CD8-positive, alpha-beta T cell (primary cell): ENCODE measurements at regions of chr16 and their contacts with region 1.

Region 1: DNA sequence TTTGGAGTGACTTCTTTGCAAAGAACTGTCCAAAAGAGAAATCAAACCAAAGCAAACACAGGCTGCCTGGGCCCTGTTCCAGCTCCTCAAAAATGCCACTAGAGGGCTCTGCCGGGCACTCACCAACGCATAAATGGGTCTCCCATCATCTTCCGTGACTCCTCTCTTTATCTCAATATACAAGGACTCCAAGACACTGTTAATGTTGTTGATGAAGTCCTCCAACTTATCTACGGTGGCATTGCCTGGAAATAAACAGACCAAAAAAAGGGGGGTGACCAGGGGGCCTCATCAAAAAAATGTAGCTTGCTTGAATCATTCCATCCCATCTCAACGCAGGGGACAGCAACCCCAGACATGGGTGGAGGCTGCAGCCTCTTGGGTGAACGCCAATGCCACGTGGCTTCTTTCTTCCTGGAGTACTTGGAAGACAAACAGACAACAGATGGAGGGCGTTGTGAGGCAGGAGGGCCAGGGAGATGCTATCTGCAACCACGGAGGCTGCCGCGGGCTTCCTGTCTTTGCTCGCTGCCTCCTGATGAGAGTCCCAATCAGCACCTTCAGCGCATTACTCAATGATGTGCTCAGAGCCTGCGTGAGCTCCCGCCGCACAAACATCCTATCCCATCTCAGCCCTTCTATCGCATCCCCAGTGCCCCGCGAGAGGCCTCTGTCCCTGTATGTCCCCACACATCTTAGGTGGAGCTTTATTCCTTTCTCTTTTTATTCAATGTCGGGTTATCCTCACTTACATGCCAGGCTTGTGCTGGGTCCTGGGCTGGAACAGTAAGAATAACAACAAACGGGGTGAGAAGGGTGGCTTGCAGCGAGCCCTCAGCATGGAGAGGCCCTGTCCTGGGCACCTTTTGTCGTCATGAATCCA is 32.0 kb downstream of the KDM8 start:
- DNase-seq: peak; percentile 78 to 98 (median 93)
- ATAC-seq: peak; percentile 64
- H3K4me3 ChIP-seq: peak overlapping the region; percentile 14 to 30
- H3K4me3 Mint-ChIP-seq: peak overlapping the region; percentile 78
- H3K27ac ChIP-seq: peak overlapping the region; percentile 90 to 97
- H3K27ac Mint-ChIP-seq: peak overlapping the region; percentile 98
- H3K4me1 ChIP-seq: peaks cover 84% of the 10 kb centered on the region
- H3K4me1 Mint-ChIP-seq: peaks cover 92% of the 10 kb centered on the region
- H3K27me3 ChIP-seq: no peaks in the 10 kb centered on the region
- H3K27me3 Mint-ChIP-seq: no peaks in the 10 kb centered on the region
- CTCF ChIP-seq: peak; percentile 76

Region 2: DNA sequence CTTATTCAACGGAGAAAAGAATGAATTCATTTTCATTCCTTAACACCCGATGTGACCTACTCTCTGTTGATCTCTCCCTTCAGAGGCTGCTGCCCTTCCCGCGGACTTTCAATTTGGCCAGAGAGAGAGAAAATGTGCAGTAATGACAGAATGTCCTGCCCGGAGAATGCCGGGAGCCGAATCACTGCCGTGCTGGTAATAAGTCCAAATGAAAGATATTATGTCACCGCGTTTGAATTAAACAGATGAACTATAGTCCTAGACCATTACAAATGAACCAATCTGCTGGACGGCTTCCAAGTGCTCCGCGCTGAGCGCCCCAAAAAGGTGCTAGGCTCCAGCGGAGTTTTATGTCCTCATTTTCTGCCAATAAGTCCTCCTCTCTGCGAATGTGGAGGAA is 183.3 kb before region 1 on chr16:
- CTCF ChIA-PET with region 1: no interaction called
- POLR2A ChIA-PET with region 1: no interaction called
- intact Hi-C with region 1: no loop called
- DNase-seq: no peak
- ATAC-seq: no peak
- H3K4me3 ChIP-seq: no peak overlapping the region
- H3K4me3 Mint-ChIP-seq: no peak overlapping the region
- H3K27ac ChIP-seq: no peak overlapping the region
- H3K27ac Mint-ChIP-seq: no peak overlapping the region
- H3K4me1 ChIP-seq: no peaks in the 10 kb centered on the region
- H3K4me1 Mint-ChIP-seq: no peaks in the 10 kb centered on the region
- H3K27me3 ChIP-seq: no peaks in the 10 kb centered on the region
- H3K27me3 Mint-ChIP-seq: peaks cover 2% of the 10 kb centered on the region
- CTCF ChIP-seq: no peak

Region 3: GRCh38 chr16:27109666-27110523 is 125.4 kb before region 1 on chr16:
- CTCF ChIA-PET with region 1: no interaction called
- POLR2A ChIA-PET with region 1: interaction called, 3 read pairs
- intact Hi-C with region 1: loop called in 1 of 2 experiments (anchors 2 kb)
- DNase-seq: peak; percentile 64 to 85 (median 72)
- ATAC-seq: peak; percentile 98
- H3K4me3 ChIP-seq: peak overlapping the region; percentile 29 to 43
- H3K4me3 Mint-ChIP-seq: peak overlapping the region; percentile 66
- H3K27ac ChIP-seq: no peak overlapping the region
- H3K27ac Mint-ChIP-seq: no peak overlapping the region
- H3K4me1 ChIP-seq: peaks cover 9% of the 10 kb centered on the region
- H3K4me1 Mint-ChIP-seq: no peaks in the 10 kb centered on the region
- H3K27me3 ChIP-seq: no peaks in the 10 kb centered on the region
- H3K27me3 Mint-ChIP-seq: peaks cover 7% of the 10 kb centered on the region
- CTCF ChIP-seq: peak; percentile 74

Region 4: DNA sequence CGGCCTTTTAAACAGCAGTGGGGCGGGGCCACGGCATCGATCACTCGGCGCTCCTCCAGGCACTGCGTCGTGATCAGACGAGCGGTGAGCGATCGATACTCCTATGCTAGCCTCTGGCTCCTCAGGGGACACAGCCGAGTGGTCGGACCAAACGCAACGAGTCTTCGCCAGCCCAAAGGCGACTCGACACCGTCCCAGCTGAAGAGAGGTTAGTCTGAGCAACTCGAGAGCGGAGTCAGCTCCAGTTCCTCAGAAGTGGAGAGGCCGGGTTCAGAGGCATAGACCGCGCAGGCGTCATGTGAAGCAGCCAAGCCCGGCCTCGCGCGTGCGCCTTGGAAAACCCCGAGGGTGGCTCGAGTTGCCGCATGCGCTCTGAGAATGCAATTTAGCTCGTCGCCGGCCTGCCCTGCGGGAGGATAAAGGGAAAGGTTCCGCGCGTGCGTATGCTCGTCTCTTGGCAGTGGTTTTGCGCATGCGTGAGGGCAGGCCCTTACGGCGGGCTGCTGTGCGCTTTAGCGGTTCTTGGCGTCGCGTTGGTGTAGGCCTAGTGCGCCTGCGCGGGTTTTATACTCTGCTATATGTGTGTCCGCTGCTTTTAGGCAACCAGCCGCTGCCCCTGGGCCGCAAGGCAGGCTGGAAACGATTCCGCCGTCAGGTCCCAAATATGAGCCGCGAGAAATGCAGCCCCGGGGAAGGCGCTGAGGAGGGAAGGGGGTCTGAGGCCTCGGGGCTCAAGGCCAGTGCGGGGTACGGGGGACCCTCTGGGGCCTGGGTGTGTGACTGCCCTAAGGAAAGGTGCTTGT is 31.7 kb before region 1 on chr16 and contains the start of gene KDM8:
- CTCF ChIA-PET with region 1: interaction called, 25 read pairs
- POLR2A ChIA-PET with region 1: interaction called, 19 read pairs
- intact Hi-C with region 1: loop called (anchors 1 to 2 kb)
- DNase-seq: peak; percentile 99 to 100 (median 100)
- ATAC-seq: peak; percentile 85
- H3K4me3 ChIP-seq: peak within 1 kb of the TSS; percentile 83 to 93
- H3K4me3 Mint-ChIP-seq: peak within 1 kb of the TSS; percentile 96
- H3K27ac ChIP-seq: peak within 1 kb of the TSS; percentile 83 to 97
- H3K27ac Mint-ChIP-seq: peak within 1 kb of the TSS; percentile 99
- H3K4me1 ChIP-seq: peaks cover 54% of the 10 kb centered on the region
- H3K4me1 Mint-ChIP-seq: peaks cover 61% of the 10 kb centered on the region
- H3K27me3 ChIP-seq: no peaks in the 10 kb centered on the region
- H3K27me3 Mint-ChIP-seq: no peaks in the 10 kb centered on the region
- CTCF ChIP-seq: no peak
- total RNA-seq, gene KDM8: 17.6 to 22.6 TPM

Region 5: DNA sequence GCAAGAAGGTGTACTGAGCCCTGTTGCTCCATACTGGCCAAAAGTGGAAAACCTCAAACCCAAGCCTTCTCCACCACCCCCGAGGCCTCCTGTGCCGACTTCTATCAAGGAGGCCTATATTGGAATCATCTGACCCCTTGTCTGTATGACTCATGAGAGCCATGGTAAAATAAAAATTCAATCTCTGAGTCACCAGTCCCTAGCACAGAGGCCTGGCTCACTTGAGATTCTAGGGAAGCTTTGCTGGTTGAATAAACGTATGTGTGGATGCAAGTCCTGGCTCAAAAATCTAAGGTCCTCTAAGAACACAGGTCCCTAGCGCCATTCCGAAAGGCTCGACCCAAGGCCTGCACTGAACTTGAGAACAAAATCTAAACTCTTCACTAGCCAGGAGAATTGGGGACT is 18.2 kb after region 1 on chr16:
- CTCF ChIA-PET with region 1: interaction called, 23 read pairs
- POLR2A ChIA-PET with region 1: interaction called, 4 read pairs
- intact Hi-C with region 1: no loop called
- DNase-seq: peak in 1 of 9 experiments; percentile 38
- ATAC-seq: no peak
- H3K4me3 ChIP-seq: no peak overlapping the region
- H3K4me3 Mint-ChIP-seq: peak overlapping the region; percentile 63
- H3K27ac ChIP-seq: no peak overlapping the region
- H3K27ac Mint-ChIP-seq: peak overlapping the region; percentile 72
- H3K4me1 ChIP-seq: peaks cover 24% of the 10 kb centered on the region
- H3K4me1 Mint-ChIP-seq: peaks cover 51% of the 10 kb centered on the region
- H3K27me3 ChIP-seq: no peaks in the 10 kb centered on the region
- H3K27me3 Mint-ChIP-seq: no peaks in the 10 kb centered on the region
- CTCF ChIP-seq: no peak

Region 6: GRCh38 chr16:27318392-27319226 is 83.3 kb after region 1 on chr16:
- CTCF ChIA-PET with region 1: interaction called, 57 read pairs
- POLR2A ChIA-PET with region 1: interaction called, 16 read pairs
- intact Hi-C with region 1: loop called (anchors 1 to 2 kb)
- DNase-seq: peak; percentile 10 to 76 (median 61)
- ATAC-seq: peak; percentile 67
- H3K4me3 ChIP-seq: peak overlapping the region; percentile 12 to 25
- H3K4me3 Mint-ChIP-seq: peak overlapping the region; percentile 74
- H3K27ac ChIP-seq: peak overlapping the region; percentile 28 to 87
- H3K27ac Mint-ChIP-seq: peak overlapping the region; percentile 98
- H3K4me1 ChIP-seq: peaks cover 75% of the 10 kb centered on the region
- H3K4me1 Mint-ChIP-seq: peaks cover 73% of the 10 kb centered on the region
- H3K27me3 ChIP-seq: no peaks in the 10 kb centered on the region
- H3K27me3 Mint-ChIP-seq: no peaks in the 10 kb centered on the region
- CTCF ChIP-seq: no peak

Region 7: DNA sequence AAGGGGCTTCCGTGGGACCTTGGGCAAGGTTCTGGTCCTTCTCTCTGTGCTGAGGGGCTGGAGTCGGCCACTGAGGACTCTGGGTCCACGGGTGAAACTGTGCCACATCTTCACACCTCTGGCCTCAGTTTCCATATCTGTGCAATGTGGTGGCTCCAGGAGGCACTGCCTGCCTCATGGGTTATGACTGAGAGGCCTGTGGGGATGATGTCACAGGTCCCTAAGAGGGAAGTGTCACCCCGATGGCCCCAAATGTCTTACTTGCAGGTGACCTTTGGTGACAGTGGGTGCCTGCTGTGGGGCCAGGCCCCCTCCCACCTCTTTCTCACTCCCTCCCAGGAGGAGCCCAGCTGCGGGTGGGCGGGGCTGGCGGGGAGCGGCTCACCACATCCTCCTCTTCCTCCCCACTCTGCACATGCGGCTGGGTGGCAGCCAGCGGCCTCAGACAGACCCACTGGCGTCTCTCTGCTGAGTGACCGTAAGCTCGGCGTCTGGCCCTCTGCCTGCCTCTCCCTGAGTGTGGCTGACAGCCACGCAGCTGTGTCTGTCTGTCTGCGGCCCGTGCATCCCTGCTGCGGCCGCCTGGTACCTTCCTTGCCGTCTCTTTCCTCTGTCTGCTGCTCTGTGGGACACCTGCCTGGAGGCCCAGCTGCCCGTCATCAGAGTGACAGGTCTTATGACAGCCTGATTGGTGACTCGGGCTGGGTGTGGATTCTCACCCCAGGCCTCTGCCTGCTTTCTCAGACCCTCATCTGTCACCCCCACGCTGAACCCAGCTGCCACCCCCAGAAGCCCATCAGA is 166.7 kb after region 1 on chr16 and contains the start of gene IL21R:
- CTCF ChIA-PET with region 1: interaction called, 15 read pairs
- POLR2A ChIA-PET with region 1: interaction called, 20 read pairs
- intact Hi-C with region 1: loop called (anchors 1 kb)
- DNase-seq: peak; percentile 75 to 97 (median 92)
- ATAC-seq: peak; percentile 78
- H3K4me3 ChIP-seq: peak within 1 kb of the TSS; percentile 72 to 78
- H3K4me3 Mint-ChIP-seq: peak within 1 kb of the TSS; percentile 97
- H3K27ac ChIP-seq: peak within 1 kb of the TSS; percentile 85 to 86
- H3K27ac Mint-ChIP-seq: peak within 1 kb of the TSS; percentile 99
- H3K4me1 ChIP-seq: peaks cover 48% of the 10 kb centered on the region
- H3K4me1 Mint-ChIP-seq: peaks cover 69% of the 10 kb centered on the region
- H3K27me3 ChIP-seq: no peaks in the 10 kb centered on the region
- H3K27me3 Mint-ChIP-seq: no peaks in the 10 kb centered on the region
- CTCF ChIP-seq: no peak
- total RNA-seq, gene IL21R: 113 to 121 TPM

Region 8: GRCh38 chr16:27455700-27456099 is 220.4 kb after region 1 on chr16:
- CTCF ChIA-PET with region 1: interaction called, 18 read pairs
- POLR2A ChIA-PET with region 1: interaction called, 12 read pairs
- intact Hi-C with region 1: loop called (anchors 1 kb)
- DNase-seq: peak in 1 of 9 experiments; percentile 64
- ATAC-seq: peak; percentile 30
- H3K4me3 ChIP-seq: no peak overlapping the region
- H3K4me3 Mint-ChIP-seq: peak overlapping the region; percentile 27
- H3K27ac ChIP-seq: peak overlapping the region in 1 of 2 experiments; percentile 39
- H3K27ac Mint-ChIP-seq: peak overlapping the region; percentile 83
- H3K4me1 ChIP-seq: peaks cover 53% of the 10 kb centered on the region
- H3K4me1 Mint-ChIP-seq: peaks cover 74% of the 10 kb centered on the region
- H3K27me3 ChIP-seq: no peaks in the 10 kb centered on the region
- H3K27me3 Mint-ChIP-seq: no peaks in the 10 kb centered on the region
- CTCF ChIP-seq: no peak

Region 9: GRCh38 chr16:27529962-27530361 is 294.7 kb after region 1 on chr16:
- CTCF ChIA-PET with region 1: no interaction called
- POLR2A ChIA-PET with region 1: no interaction called
- intact Hi-C with region 1: no loop called
- DNase-seq: no peak
- ATAC-seq: no peak
- H3K4me3 ChIP-seq: no peak overlapping the region
- H3K4me3 Mint-ChIP-seq: no peak overlapping the region
- H3K27ac ChIP-seq: no peak overlapping the region
- H3K27ac Mint-ChIP-seq: no peak overlapping the region
- H3K4me1 ChIP-seq: no peaks in the 10 kb centered on the region
- H3K4me1 Mint-ChIP-seq: peaks cover 2% of the 10 kb centered on the region
- H3K27me3 ChIP-seq: no peaks in the 10 kb centered on the region
- H3K27me3 Mint-ChIP-seq: no peaks in the 10 kb centered on the region
- CTCF ChIP-seq: no peak